ENCODE measurements at regions of chr10 and their contacts with region 1.

Region 1: DNA sequence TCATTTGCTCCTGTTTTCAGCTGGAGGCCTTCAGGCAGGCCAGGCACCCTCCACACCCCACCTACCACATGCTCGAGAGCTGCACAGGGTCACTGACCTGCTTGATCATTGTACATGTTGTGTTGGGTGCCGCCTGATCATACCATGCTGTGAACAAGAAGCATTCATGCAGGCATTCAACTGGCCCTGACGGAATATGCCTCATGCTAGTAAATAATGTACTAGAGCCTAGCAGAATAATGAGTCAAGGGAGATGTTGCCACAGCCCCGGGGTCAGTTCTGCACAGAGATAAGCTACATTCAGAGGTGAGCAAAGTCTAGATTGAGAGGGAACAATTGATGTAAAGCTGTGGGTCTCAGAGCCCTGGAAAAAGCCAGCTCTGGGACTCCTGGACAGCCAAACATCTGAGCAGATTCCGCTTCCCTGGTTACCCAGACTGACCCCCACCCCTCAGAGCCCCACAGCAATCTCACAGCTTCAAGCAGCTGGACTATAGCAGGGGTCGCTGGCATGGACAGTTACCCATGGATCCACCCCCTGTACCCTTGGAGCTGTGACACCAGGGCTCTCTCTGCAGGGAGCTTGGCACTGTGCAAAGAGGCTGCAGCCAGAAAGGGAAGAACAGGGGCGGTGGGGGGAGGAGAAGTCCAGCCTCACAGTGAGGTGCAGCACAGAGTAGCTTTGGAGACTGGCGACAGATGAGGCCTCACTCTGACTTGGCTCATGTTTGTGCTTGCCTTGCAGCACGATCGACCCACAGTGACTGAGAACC is 86.6 kb downstream of the FRMPD2 start:
- DNase-seq: no peak
- H3K27ac ChIP-seq: no peak overlapping the region
- CTCF ChIP-seq: no peak

Region 2: GRCh38 chr10:48363617-48364355 is 175.9 kb after region 1 on chr10:
- CTCF ChIA-PET with region 1: no interaction called
- POLR2A ChIA-PET with region 1: no interaction called
- DNase-seq: peak; percentile 46
- H3K27ac ChIP-seq: no peak overlapping the region
- CTCF ChIP-seq: peak; percentile 76

Region 3: GRCh38 chr10:49106451-49106850 is 918.6 kb after region 1 on chr10:
- CTCF ChIA-PET with region 1: no interaction called
- POLR2A ChIA-PET with region 1: interaction called, 10 read pairs
- DNase-seq: no peak
- H3K27ac ChIP-seq: no peak overlapping the region
- CTCF ChIP-seq: no peak